Activated naive CD4-positive, alpha-beta T cell treated with anti-CD3 and anti-CD28 coated beads for 36 hours (primary cell): ENCODE measurements at regions of chr2 and their contacts with region 1.

Region 1: DNA sequence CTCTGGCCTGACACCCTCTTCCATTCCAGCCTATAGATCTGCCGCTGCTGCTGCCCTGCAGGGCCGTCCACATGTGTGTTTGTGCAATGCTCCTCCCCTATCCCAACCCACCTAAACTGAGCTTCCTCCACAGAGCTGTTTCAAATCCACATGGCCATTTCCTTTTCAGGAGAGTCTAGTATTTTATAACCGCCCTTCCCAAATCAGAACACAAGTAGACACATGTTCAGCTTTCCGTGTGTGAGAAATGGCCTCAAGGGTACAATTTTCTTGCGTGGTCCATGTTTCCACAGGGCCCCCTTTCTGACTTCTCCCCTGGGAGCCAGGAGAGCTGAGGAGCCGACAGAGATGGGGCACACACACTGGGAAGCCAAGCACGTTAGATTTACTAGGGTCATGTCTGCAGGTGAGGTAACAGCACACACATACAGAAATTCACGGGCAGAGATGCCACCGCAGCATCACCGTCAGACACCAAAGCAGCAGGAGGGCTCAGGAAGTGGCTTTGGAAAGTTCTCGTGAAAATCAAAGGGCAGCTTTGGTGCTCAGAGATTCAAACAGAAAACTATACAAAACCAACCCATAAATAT is 102.9 kb upstream of the TGFA start:
- DNase-seq: peak; percentile 62
- H3K4me3 Mint-ChIP-seq: no peak overlapping the region
- H3K27ac Mint-ChIP-seq: peak overlapping the region; percentile 23
- H3K4me1 Mint-ChIP-seq: peaks cover 20% of the 10 kb centered on the region
- H3K27me3 Mint-ChIP-seq: no peaks in the 10 kb centered on the region

Region 2: GRCh38 chr2:68987021-68987503 is 1669.5 kb before region 1 on chr2:
- CTCF ChIA-PET with region 1: no interaction called
- intact Hi-C with region 1: no loop called
- DNase-seq: no peak
- H3K4me3 Mint-ChIP-seq: no peak overlapping the region
- H3K27ac Mint-ChIP-seq: no peak overlapping the region
- H3K4me1 Mint-ChIP-seq: no peaks in the 10 kb centered on the region
- H3K27me3 Mint-ChIP-seq: no peaks in the 10 kb centered on the region

Region 3: DNA sequence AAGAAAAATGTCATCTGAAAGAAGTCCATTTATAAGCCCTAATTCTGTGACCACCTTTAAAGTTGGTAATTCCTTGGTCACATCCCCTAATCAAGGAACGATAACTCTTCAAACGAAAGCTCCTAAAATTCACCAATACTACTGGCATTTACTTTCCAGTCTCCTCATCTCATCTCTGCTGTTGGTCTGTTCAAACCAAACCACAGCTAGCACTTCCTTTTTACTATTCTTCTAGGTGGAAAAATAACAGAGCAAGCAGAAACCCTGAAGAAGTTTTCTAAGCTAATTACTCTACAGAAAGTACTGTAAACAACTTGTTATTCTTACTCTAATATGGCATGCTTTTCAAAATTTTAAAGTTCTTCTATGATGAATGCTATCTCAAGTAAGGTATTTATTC is 429.7 kb before region 1 on chr2:
- CTCF ChIA-PET with region 1: no interaction called
- intact Hi-C with region 1: no loop called
- DNase-seq: no peak
- H3K4me3 Mint-ChIP-seq: no peak overlapping the region
- H3K27ac Mint-ChIP-seq: no peak overlapping the region
- H3K4me1 Mint-ChIP-seq: peaks cover 5% of the 10 kb centered on the region
- H3K27me3 Mint-ChIP-seq: no peaks in the 10 kb centered on the region

Region 4: DNA sequence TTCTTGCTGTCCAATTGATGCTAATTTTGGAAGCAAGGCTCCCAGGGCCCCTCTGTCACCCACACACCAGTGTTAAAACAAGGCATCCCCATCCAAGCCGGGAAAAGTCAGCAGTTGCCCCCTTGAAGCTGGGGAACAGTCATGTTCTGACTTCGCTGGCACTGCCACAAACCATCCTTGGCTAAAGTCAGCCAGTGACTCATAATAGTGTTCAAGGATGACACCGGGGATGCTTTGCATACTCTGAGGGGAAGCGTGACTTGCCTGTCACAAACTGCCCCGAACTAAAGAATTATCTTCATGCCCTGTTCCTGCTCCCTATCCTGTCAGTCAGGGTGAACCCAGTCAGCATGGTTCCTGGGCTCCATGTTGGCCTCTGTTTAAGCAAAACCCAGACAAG is 139.9 kb before region 1 on chr2:
- CTCF ChIA-PET with region 1: no interaction called
- intact Hi-C with region 1: no loop called
- DNase-seq: peak; percentile 34
- H3K4me3 Mint-ChIP-seq: no peak overlapping the region
- H3K27ac Mint-ChIP-seq: peak overlapping the region; percentile 69
- H3K4me1 Mint-ChIP-seq: peaks cover 11% of the 10 kb centered on the region
- H3K27me3 Mint-ChIP-seq: no peaks in the 10 kb centered on the region

Region 5: DNA sequence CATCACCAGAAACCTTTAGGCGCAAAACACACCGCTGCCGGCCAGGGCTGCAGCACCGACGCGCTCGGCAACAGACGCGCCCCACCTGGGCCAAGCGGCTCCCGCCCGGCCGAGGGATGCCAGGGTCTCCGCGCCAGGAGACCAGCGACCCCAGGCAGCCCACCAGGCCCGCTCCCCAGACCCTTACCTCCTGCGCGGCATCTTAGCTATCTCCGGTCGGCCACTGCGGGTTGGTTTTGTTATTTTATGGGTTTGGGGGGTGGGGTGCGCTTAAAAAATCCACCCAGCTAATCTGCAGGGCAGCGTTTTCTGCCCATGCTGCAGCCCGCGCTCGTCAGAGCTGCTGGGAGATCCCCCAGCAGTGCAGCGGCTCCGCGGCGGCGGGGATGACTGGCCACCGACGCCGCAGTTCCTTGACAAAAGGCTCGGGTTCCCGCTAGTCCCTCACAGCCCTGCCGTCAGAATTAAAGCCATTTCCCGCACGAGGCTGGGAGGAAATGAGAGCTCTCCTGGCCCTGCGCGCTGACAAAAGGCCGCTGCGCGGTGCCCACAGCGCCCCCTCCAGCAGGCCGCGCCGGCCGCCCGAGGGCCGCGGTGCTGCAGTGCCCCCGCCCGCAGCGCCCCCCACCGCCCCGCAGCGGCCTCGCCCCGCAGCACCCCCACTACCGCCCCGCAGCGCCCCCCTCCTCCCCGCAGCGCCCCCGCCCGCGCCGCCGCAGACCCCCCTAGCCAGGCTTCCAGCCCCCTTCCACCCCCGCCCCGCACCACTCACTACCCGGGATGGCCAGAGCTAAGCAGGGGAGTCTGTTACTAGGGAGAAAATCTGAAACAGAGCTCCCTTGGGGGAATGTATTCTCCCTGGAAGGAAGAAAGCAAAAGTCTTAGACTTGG is 111.4 kb after region 1 on chr2 and contains the start of gene ADD2:
- CTCF ChIA-PET with region 1: interaction called, 25 read pairs
- intact Hi-C with region 1: loop called (anchors 1 kb)
- DNase-seq: peak; percentile 89
- H3K4me3 Mint-ChIP-seq: peak within 1 kb of the TSS; percentile 91
- H3K27ac Mint-ChIP-seq: peak within 1 kb of the TSS; percentile 83
- H3K4me1 Mint-ChIP-seq: peaks cover 8% of the 10 kb centered on the region
- H3K27me3 Mint-ChIP-seq: peaks cover 10% of the 10 kb centered on the region
- total RNA-seq, gene ADD2: 42.9 to 46.2 TPM

Region 6: DNA sequence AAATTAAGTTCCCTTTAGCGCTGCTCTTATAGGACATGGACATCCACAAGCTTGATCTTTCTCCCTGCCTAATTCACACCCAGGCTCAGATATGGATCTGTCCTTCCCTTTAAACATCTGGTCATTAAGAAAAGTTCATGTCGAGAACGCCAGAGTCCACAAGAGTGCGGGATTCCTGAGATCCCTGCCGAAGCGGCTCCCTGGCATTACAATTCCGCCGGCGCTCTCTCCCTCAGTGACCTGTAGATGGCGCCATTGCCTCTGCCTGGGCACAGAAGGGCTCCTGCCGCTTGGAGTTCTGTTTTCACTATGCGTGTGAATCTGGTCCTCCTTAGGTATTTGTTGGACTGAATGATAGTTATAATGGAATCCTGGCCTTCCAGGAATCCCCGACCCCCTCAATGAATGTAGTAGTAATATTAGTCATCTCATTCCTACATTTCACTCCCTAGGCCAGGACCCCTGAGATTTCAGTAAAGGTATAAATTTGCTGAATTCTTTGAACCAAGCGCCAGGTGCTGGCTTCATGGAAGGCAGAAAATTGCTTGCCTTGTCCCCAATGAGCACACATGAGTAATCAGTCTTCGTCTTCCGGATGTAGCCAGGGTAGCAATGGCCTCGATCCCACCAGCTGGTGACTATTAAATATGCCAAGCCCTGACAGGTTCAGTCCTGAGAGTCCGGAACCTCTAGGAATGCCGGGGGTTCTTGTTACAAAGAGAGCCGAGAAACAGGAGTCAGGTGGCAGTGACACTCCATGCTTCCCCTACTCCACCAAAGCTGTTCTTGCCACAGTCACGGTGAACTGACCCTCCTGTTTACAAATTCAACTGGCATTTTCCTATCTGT is 205.5 kb after region 1 on chr2:
- CTCF ChIA-PET with region 1: interaction called, 3 read pairs
- intact Hi-C with region 1: loop called (anchors 2 kb)
- DNase-seq: peak; percentile 87
- H3K4me3 Mint-ChIP-seq: no peak overlapping the region
- H3K27ac Mint-ChIP-seq: no peak overlapping the region
- H3K4me1 Mint-ChIP-seq: peaks cover 2% of the 10 kb centered on the region
- H3K27me3 Mint-ChIP-seq: peaks cover 12% of the 10 kb centered on the region

Region 7: DNA sequence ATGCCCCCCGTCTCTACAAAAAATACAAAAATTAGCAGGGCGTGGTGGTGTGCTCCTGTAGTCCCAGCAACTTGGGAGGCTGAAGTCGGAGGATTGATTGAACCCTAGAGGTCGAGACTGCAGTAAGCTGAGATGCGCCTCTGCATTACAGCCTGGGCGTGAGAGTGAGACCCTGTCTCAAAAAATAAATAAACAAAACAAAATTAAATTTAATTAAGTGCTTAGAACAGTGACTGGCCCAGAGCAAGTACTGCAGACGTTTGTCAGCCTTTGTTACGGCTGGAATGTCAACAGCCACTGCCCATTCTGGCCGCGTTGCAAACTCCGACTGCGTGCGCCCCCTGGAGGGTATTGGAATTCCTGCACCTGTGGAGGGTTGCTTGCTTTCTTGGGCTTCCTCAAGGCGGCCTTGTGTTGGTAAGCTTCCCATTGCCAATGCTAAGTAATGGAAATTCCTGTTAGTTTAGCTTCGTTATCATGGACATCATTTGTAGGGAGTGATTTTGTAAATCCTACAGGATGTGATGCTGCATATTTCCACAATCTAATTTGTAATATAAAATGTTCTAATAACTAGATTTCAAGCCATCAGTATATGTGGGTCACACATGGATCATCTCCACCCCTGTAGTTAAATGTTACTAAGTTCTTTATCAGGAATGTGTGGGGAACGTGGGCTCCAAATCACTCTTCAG is 263.3 kb after region 1 on chr2:
- CTCF ChIA-PET with region 1: interaction called, 3 read pairs
- intact Hi-C with region 1: loop called (anchors 2 kb)
- DNase-seq: peak; percentile 85
- H3K4me3 Mint-ChIP-seq: no peak overlapping the region
- H3K27ac Mint-ChIP-seq: no peak overlapping the region
- H3K4me1 Mint-ChIP-seq: no peaks in the 10 kb centered on the region
- H3K27me3 Mint-ChIP-seq: peaks cover 22% of the 10 kb centered on the region